Caco-2 (cell line): ENCODE measurements at regions of chr17 and their contacts with region 1.

Region 1: DNA sequence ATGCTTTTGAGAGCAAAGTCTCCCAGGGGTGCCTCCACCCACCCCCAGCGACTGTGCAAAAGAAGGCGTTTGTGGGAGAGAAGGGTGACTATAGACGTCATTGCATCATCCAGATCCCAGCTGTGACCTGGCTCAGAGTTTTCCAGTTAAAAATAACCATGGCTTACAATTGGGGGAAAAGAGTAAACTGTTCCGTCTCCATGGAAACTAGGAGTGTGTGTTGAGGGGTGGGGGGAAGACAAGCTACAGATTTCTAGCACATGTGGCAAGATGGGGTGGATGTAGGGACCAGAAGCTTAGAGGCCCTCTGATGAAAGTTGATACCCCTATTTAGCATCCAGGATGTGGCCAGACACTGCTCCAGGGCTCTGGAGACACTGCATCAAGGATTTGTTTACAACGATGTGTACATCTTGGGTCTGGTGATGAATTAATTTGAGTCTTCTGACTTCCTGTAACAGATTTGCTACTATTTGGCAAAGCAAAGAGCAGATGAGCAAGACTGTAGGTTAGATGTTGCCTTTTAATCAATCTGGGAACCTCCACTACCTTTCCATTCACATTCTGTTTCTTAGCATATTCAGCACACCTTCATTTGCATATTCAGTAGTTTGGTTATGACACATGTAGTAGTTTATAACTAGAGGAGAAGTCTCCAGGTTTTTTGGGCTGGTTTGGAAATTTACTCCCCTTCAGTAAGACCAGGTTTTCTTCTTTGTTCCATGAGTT is 6.2 kb upstream of the DUSP14 start:
- DNase-seq: no peak
- H3K4me3 ChIP-seq: no peak overlapping the region
- H3K4me3 Mint-ChIP-seq: no peak overlapping the region
- H3K27ac Mint-ChIP-seq: peak overlapping the region; percentile 65
- H3K4me1 ChIP-seq: peaks cover 17% of the 10 kb centered on the region
- H3K4me1 Mint-ChIP-seq: peaks cover 43% of the 10 kb centered on the region
- H3K27me3 ChIP-seq: no peaks in the 10 kb centered on the region
- H3K27me3 Mint-ChIP-seq: no peaks in the 10 kb centered on the region
- CTCF ChIP-seq: no peak

Region 2: GRCh38 chr17:37438141-37438540 is 45.3 kb before region 1 on chr17:
- CTCF ChIA-PET with region 1: interaction called, 3 read pairs
- POLR2A ChIA-PET with region 1: interaction called, 11 read pairs
- intact Hi-C with region 1: no loop called
- DNase-seq: no peak
- H3K4me3 ChIP-seq: no peak overlapping the region
- H3K4me3 Mint-ChIP-seq: no peak overlapping the region
- H3K27ac Mint-ChIP-seq: no peak overlapping the region
- H3K4me1 ChIP-seq: no peaks in the 10 kb centered on the region
- H3K4me1 Mint-ChIP-seq: no peaks in the 10 kb centered on the region
- H3K27me3 ChIP-seq: no peaks in the 10 kb centered on the region
- H3K27me3 Mint-ChIP-seq: no peaks in the 10 kb centered on the region
- CTCF ChIP-seq: peak in 1 of 2 experiments; percentile 8